CD4-positive, alpha-beta T cell (primary cell): ENCODE measurements at regions of chr17 and their contacts with region 1.

Region 1: DNA sequence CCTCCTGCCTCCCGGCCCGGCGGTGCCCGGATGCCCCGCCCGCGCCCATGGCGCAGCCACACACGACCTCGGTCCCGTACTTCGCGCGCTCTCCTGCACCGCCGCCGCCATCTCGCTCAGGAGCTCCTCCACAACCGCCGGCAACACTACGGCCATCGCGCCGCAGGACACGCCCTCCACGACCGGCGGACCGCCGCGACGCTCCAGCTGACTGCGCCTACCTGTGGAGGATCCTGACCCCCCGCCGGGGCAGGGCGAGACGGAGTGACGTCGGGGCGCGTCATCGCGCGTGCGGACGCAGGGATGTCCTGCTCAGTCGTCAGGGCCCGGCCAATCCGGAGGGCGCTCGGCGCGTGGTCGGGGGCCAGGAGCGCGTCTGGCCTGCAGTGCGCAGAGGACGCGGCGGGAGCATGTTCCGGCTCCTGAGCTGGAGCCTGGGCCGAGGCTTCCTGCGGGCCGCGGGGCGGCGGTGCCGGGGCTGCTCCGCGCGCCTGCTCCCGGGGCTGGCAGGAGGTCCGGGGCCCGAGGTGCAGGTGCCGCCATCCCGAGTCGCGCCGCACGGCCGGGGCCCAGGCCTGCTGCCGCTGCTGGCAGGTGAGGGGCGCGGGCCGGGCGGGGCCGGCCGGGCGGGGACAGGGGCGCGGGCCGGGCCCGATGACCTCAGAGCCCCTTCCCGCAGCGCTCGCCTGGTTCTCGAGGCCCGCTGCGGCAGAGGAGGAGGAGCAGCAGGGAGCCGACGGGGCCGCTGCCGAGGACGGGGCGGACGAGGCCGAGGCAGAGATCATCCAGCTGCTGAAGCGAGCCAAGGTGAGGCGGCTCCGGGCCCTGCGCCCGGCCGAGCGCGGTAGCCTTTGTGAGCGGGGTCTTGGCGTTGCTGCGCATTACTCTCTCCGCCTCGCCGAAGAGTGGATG is at the starts of genes TTC19 and ZSWIM7:
- DNase-seq: peak; percentile 73 to 96 (median 91)
- ATAC-seq: peak; percentile 73
- H3K4me3 ChIP-seq: peak within 1 kb of the TSS; percentile 78
- H3K4me3 Mint-ChIP-seq: peak within 1 kb of the TSS; percentile 95
- H3K27ac ChIP-seq: peak within 1 kb of the TSS; percentile 86 to 89
- H3K27ac Mint-ChIP-seq: peak within 1 kb of the TSS; percentile 88
- H3K4me1 ChIP-seq: peaks cover 27% of the 10 kb centered on the region
- H3K4me1 Mint-ChIP-seq: peaks cover 46% of the 10 kb centered on the region
- H3K27me3 ChIP-seq: no peaks in the 10 kb centered on the region
- H3K27me3 Mint-ChIP-seq: no peaks in the 10 kb centered on the region
- CTCF ChIP-seq: no peak
- total RNA-seq, gene TTC19: 57.8 to 66.7 TPM
- total RNA-seq, gene ZSWIM7: 11.3 to 13.0 TPM

Region 2: GRCh38 chr17:15257258-15257788 is 742.4 kb before region 1 on chr17:
- CTCF ChIA-PET with region 1: no interaction called
- POLR2A ChIA-PET with region 1: no interaction called
- intact Hi-C with region 1: loop called (anchors 1 to 2 kb)
- DNase-seq: peak; percentile 20 to 75 (median 34)
- ATAC-seq: no peak
- H3K4me3 ChIP-seq: no peak overlapping the region
- H3K4me3 Mint-ChIP-seq: no peak overlapping the region
- H3K27ac ChIP-seq: no peak overlapping the region
- H3K27ac Mint-ChIP-seq: no peak overlapping the region
- H3K4me1 ChIP-seq: peaks cover 21% of the 10 kb centered on the region
- H3K4me1 Mint-ChIP-seq: peaks cover 16% of the 10 kb centered on the region
- H3K27me3 ChIP-seq: peaks cover 28 to 44% of the 10 kb centered on the region in 2 experiments
- H3K27me3 Mint-ChIP-seq: peaks cover 76% of the 10 kb centered on the region
- CTCF ChIP-seq: peak; percentile 84

Region 3: DNA sequence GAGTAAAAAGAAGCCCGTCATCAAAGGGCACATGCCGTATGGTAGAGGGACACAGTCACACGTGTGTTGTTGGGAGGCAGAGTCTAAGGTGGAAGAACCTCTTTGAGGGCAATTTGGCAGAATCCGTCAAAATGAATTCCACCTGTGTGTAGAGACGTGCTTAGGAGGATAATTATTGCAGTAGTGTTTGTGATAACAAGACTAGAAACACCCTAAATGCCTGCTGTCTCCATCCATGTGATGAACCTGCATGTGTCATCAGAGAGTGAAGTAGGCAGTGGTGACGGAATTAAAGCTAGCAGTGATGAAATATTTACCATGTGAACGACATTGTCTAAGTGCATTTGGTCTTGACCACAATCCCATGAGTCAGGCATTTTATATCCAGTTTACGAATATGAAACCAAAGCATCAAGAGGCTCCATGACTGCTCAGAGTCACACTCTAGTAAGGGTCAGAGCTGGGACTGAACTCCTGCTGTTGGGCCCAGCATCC is 116.0 kb before region 1 on chr17:
- CTCF ChIA-PET with region 1: no interaction called
- POLR2A ChIA-PET with region 1: no interaction called
- intact Hi-C with region 1: no loop called
- DNase-seq: peak in 2 of 14 experiments; percentile 44 to 62
- ATAC-seq: no peak
- H3K4me3 ChIP-seq: no peak overlapping the region
- H3K4me3 Mint-ChIP-seq: no peak overlapping the region
- H3K27ac ChIP-seq: no peak overlapping the region
- H3K27ac Mint-ChIP-seq: no peak overlapping the region
- H3K4me1 ChIP-seq: peaks cover 9% of the 10 kb centered on the region
- H3K4me1 Mint-ChIP-seq: peaks cover 11% of the 10 kb centered on the region
- H3K27me3 ChIP-seq: no peaks in the 10 kb centered on the region
- H3K27me3 Mint-ChIP-seq: no peaks in the 10 kb centered on the region
- CTCF ChIP-seq: no peak

Region 4: DNA sequence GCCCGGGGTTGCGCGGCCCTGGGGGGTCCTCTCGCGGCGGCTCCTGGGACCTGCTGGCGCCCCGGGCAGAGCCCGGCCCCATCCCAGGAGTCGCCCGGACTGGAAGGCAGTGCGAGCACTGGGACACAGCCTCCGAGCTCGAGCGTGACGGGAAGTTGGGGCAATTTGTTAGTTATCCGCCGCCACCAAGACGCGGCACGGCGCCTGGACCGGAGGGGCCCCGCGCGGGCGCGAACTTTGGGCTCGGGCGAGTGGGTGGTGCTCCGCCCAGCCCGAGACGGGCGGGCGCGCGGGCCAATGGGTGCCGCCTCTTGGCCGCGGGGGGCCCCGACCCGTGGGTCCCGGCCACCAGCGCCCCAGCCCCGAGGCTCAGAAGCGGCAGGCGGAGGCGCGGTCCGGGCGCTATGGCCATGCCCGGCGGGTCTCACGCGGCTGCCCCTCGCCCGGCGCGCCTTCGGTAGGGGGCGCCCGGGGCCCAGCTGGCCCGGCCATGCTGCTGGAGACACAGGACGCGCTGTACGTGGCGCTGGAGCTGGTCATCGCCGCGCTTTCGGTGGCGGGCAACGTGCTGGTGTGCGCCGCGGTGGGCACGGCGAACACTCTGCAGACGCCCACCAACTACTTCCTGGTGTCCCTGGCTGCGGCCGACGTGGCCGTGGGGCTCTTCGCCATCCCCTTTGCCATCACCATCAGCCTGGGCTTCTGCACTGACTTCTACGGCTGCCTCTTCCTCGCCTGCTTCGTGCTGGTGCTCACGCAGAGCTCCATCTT is 54.8 kb before region 1 on chr17 and contains the start of gene ADORA2B:
- CTCF ChIA-PET with region 1: interaction called, 3 read pairs
- POLR2A ChIA-PET with region 1: interaction called, 4 read pairs
- intact Hi-C with region 1: loop called in 1 of 2 experiments (anchors 1 kb)
- DNase-seq: peak in 10 of 14 experiments; percentile 4 to 62 (median 30)
- ATAC-seq: peak; percentile 46
- H3K4me3 ChIP-seq: peak within 1 kb of the TSS; percentile 52
- H3K4me3 Mint-ChIP-seq: peak within 1 kb of the TSS; percentile 85
- H3K27ac ChIP-seq: no peak within 1 kb of the TSS
- H3K27ac Mint-ChIP-seq: no peak within 1 kb of the TSS
- H3K4me1 ChIP-seq: peaks cover 17% of the 10 kb centered on the region
- H3K4me1 Mint-ChIP-seq: peaks cover 8% of the 10 kb centered on the region
- H3K27me3 ChIP-seq: peaks cover 25 to 26% of the 10 kb centered on the region in 2 experiments
- H3K27me3 Mint-ChIP-seq: peaks cover 49% of the 10 kb centered on the region
- CTCF ChIP-seq: peak; percentile 26
- total RNA-seq, gene ADORA2B: not detected